ENCODE measurements at regions of chr12 and their contacts with region 1.

Region 1: GRCh38 chr12:26732005-26732908 is 100.7 kb downstream of the ITPR2 start:
- DNase-seq: no peak
- H3K4me3 ChIP-seq: no peak overlapping the region
- CTCF ChIP-seq: no peak
- POLR2A ChIP-seq: no peak

Region 2: GRCh38 chr12:26226629-26227360 is 505.5 kb before region 1 on chr12:
- intact Hi-C with region 1: no loop called
- DNase-seq: peak in 1 of 2 donors; percentile 88
- H3K4me3 ChIP-seq: no peak overlapping the region
- CTCF ChIP-seq: no peak
- POLR2A ChIP-seq: no peak

Region 3: DNA sequence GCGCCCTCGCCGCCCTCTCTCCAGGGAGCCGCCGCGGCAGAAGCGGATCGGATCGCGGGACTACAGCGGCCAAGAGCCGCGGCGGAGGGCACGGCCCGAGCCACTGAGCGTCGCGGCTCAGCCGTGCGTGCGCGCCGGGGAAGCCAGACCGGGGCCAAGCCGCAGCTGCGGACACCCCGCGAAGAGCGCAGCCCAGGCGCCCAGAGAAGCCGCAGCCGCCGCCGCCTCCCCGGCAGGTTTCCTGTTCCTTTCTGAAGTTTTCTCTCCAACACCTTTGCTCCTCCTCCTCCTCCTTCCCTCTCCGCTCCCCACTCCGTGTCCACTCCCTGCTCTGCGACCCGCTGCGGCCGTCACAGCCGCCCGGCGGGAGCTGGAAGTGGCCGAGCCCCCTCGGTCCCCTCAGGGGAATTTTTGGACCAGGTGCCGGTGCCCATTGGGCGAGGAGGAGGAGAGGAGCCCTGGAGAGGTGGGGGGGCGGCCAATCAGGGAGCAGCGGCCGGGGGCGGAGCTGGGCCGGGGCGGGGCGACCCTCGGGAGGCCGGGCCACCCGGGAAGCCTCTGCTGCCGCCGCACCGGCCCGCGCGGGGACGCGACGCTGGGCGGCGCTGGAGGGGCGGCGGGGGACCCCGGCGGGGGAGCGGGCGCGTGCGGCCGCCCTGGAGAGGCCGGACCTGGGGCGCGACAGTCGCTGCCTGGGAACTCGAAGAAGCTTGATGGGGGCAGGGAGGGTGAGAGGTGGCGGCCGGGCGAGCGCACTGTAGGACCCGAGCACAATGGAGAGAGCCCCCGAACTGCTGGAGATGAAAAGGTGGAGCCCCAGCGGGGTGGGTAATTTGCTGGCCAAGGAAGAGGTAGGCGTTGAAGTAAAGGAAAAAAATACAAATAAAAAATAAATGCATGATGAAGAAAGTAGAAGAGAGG is 100.8 kb after region 1 on chr12 and contains the start of gene ITPR2:
- intact Hi-C with region 1: loop called (anchors 10 kb)
- DNase-seq: peak; percentile 91 to 99
- H3K4me3 ChIP-seq: peak within 1 kb of the TSS; percentile 57
- CTCF ChIP-seq: no peak
- POLR2A ChIP-seq: peak in 1 of 2 donors; percentile 48
- total RNA-seq, gene ITPR2: 42.8 to 62.5 (median 52.1) TPM